Esophagus squamous epithelium (tissue), 5 donors: ENCODE measurements at regions of chr4 and their contacts with region 1.

Region 1: GRCh38 chr4:153573881-153574802 is 108.0 kb downstream of the TMEM131L start:
- DNase-seq: no peak
- H3K4me3 ChIP-seq: no peak overlapping the region
- H3K27ac ChIP-seq: no peak overlapping the region
- H3K4me1 ChIP-seq: peaks cover 0 to 32% (median 5%) of the 10 kb centered on the region in 3 donors
- H3K27me3 ChIP-seq: no peaks in the 10 kb centered on the region
- CTCF ChIP-seq: peak in 5 of 6 experiments; percentile 51 to 72 (median 62)
- POLR2A ChIP-seq: no peak

Region 2: GRCh38 chr4:153142700-153143438 is 431.3 kb before region 1 on chr4:
- intact Hi-C with region 1: loop called (anchors 10 kb)
- DNase-seq: no peak
- H3K4me3 ChIP-seq: peak overlapping the region in 1 of 4 donors; percentile 40
- H3K27ac ChIP-seq: no peak overlapping the region
- H3K4me1 ChIP-seq: peaks cover 0 to 16% (median 6%) of the 10 kb centered on the region in 3 donors
- H3K27me3 ChIP-seq: no peaks in the 10 kb centered on the region
- CTCF ChIP-seq: peak; percentile 46 to 82 (median 79)
- POLR2A ChIP-seq: no peak

Region 3: GRCh38 chr4:153344131-153345010 is 229.8 kb before region 1 on chr4 and contains the start of gene MND1:
- intact Hi-C with region 1: loop called (anchors 5 kb)
- DNase-seq: peak; percentile 7
- H3K4me3 ChIP-seq: peak within 1 kb of the TSS; percentile 67 to 82 (median 74)
- H3K27ac ChIP-seq: peak within 1 kb of the TSS; percentile 9 to 72 (median 72)
- H3K4me1 ChIP-seq: peaks cover 0 to 23% (median 10%) of the 10 kb centered on the region in 3 donors
- H3K27me3 ChIP-seq: no peaks in the 10 kb centered on the region
- CTCF ChIP-seq: peak; percentile 68 to 96 (median 86)
- POLR2A ChIP-seq: no peak
- total RNA-seq, gene MND1: 2.3 to 4.2 (median 3.8) TPM

Region 4: DNA sequence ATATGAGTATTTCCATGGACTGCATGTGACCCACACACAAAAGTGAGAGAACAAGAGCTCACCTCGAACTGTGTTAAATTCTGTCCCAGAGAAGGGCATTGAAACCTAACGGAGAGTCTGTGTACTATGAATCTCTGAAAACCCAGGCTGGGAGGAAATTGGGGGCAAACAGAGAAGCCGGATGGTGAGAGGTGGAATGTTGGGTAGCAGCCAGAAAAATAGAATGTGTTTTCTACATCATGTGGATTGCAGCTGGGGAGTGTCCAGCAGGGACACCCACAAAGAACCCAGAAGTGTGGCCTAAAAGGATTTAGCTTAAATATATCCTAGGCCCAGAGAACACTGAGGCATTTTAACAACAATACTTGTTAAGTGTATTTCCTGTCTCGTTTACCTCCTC is 191.0 kb before region 1 on chr4:
- intact Hi-C with region 1: no loop called
- DNase-seq: no peak
- H3K4me3 ChIP-seq: no peak overlapping the region
- H3K27ac ChIP-seq: no peak overlapping the region
- H3K4me1 ChIP-seq: no peaks in the 10 kb centered on the region
- H3K27me3 ChIP-seq: no peaks in the 10 kb centered on the region
- CTCF ChIP-seq: no peak
- POLR2A ChIP-seq: no peak

Region 5: DNA sequence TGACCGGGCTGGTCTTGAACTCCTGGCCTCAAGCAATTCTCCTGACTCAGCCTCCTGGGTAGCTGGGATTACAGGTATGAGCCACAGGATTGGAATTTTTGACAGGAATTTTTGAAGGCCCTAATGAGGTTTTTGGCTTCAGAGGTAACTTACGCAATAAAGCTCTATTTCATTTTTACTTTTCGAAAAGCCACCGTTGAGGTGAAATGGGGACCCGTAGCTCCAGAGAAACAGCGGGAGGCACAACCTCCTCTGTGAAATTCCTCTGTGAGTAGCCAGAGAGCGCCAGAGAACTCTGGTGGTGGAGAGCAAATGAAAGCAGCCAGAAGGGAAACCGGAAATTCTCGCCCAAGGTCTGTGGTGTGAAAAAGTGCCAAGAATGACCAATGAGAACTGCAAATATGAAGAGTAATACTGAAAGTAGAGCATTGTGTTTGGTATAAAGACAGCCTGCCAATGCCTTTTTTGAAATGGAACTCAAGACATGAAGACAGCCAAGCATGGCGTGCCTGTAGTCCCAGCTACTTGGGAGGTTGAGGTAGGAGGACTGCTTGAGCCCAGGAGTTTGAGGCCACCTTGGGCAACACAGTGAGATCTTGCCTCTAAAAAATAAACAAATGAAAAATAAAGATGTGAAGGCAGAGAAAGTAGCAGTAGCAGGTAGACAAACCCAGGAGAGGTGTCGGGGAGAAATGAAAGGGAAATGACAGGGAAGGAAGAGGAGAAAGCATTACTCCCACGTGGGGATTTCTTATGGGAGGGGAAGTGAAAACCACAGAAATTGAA is 141.0 kb before region 1 on chr4:
- intact Hi-C with region 1: loop called (anchors 5 kb)
- DNase-seq: peak; percentile 13
- H3K4me3 ChIP-seq: peak overlapping the region in 2 of 4 donors; percentile 15 to 29
- H3K27ac ChIP-seq: peak overlapping the region in 2 of 4 donors; percentile 9 to 42
- H3K4me1 ChIP-seq: peaks cover 0 to 16% (median 6%) of the 10 kb centered on the region in 3 donors
- H3K27me3 ChIP-seq: no peaks in the 10 kb centered on the region
- CTCF ChIP-seq: peak; percentile 59 to 90 (median 78)
- POLR2A ChIP-seq: no peak

Region 6: DNA sequence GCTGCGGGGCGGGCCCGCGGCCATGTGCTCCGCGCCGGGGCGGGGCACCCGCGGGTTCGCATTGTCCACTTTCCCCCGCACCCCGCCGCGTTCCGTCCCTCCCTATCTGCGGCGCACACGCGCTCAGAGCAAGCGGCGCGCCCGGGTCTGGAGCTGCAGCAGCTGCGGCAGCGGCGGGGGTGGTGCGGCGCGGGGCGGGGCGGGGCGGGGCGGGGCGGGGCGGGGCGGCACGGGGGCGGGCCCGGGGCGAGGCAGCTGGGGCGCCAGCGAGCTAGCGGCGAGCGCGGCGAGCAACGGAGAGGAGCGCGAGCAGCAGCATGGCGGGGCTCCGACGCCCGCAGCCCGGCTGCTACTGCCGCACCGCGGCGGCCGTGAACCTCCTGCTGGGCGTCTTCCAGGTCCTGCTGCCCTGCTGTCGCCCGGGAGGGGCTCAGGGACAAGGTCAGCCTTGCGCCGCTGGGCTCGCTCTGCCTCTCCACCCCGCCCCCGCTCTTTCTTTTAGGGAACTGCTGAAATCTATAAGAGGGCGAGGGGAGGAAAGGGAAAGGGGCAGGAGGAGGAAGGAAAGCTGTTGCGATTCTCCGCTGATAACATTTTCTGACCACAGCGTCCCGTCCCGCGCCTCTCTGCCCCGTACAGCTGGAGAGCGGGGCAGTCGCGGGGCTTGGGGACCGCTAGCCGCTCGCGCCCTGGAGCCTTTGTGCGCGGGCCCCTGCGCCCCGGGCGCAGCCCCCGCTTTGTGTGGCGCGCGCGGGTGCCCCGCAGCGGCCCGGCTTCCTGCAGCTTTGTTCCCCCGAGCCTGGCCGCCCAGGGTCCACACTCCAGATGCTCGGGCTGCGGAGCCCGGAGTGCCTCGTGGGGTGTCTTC is 107.8 kb before region 1 on chr4 and contains the start of gene TMEM131L:
- intact Hi-C with region 1: loop called (anchors 10 kb)
- DNase-seq: peak; percentile 31
- H3K4me3 ChIP-seq: peak within 1 kb of the TSS; percentile 73 to 96 (median 82)
- H3K27ac ChIP-seq: peak within 1 kb of the TSS; percentile 84 to 92 (median 89)
- H3K4me1 ChIP-seq: peaks cover 25 to 69% (median 30%) of the 10 kb centered on the region in 3 donors
- H3K27me3 ChIP-seq: no peaks in the 10 kb centered on the region
- CTCF ChIP-seq: peak in 4 of 6 experiments; percentile 4 to 25 (median 14)
- POLR2A ChIP-seq: peak in 1 of 4 donors; percentile 78
- total RNA-seq, gene TMEM131L: 9.2 to 14.7 (median 12.4) TPM

Region 7: DNA sequence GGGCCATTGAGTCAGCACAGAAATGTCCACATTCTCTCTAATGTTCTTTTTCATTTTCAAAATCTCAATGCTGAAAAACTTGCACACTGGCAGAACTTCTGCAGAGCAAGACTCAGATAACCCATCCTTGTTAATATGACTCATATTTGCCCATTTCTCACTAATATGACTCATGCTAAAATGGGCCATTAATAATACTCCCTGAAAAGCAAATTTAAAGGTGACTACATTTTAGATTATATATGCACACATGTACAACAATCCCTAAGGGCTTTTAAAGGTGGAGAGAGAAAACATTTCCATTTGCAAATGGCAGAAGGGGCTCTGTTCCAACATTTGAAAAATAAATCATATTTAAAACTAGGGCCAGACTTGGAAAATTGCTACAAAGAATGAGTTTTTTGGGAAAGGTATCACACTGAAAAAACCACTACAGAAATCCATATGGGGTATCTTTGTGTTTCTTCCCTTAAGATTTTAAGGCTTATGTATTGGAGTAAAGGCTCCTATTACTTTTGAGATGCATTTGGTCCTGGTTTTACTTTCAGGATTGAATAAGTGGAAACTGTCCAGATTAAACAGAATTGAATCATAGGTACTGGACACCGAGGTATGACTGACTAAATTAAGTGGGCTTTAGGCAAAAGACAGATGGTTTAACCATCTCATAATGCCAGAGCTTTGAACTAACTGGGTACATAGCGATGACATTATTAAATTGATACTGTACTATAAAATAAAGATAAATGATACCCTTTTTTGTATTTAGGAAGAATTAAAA is 139.9 kb after region 1 on chr4:
- intact Hi-C with region 1: no loop called
- DNase-seq: no peak
- H3K4me3 ChIP-seq: no peak overlapping the region
- H3K27ac ChIP-seq: no peak overlapping the region
- H3K4me1 ChIP-seq: peaks cover 0 to 12% (median 0%) of the 10 kb centered on the region in 3 donors
- H3K27me3 ChIP-seq: no peaks in the 10 kb centered on the region
- CTCF ChIP-seq: no peak
- POLR2A ChIP-seq: no peak

Region 8: GRCh38 chr4:154444958-154445357 is 870.8 kb after region 1 on chr4:
- intact Hi-C with region 1: no loop called
- DNase-seq: no peak
- H3K4me3 ChIP-seq: no peak overlapping the region
- H3K27ac ChIP-seq: no peak overlapping the region
- H3K4me1 ChIP-seq: no peaks in the 10 kb centered on the region
- H3K27me3 ChIP-seq: no peaks in the 10 kb centered on the region
- CTCF ChIP-seq: no peak
- POLR2A ChIP-seq: no peak